Caco-2 (cell line): ENCODE measurements at regions of chr10 and their contacts with region 1.

Region 1: GRCh38 chr10:114103284-114103683 is 59.6 kb downstream of the ADRB1 start:
- DNase-seq: peak in 1 of 2 experiments; percentile 52
- H3K4me3 ChIP-seq: no peak overlapping the region
- H3K4me3 Mint-ChIP-seq: no peak overlapping the region
- H3K27ac Mint-ChIP-seq: no peak overlapping the region
- H3K4me1 ChIP-seq: no peaks in the 10 kb centered on the region
- H3K4me1 Mint-ChIP-seq: peaks cover 7% of the 10 kb centered on the region
- H3K27me3 ChIP-seq: no peaks in the 10 kb centered on the region
- H3K27me3 Mint-ChIP-seq: no peaks in the 10 kb centered on the region
- CTCF ChIP-seq: peak in 1 of 2 experiments; percentile 58

Region 2: DNA sequence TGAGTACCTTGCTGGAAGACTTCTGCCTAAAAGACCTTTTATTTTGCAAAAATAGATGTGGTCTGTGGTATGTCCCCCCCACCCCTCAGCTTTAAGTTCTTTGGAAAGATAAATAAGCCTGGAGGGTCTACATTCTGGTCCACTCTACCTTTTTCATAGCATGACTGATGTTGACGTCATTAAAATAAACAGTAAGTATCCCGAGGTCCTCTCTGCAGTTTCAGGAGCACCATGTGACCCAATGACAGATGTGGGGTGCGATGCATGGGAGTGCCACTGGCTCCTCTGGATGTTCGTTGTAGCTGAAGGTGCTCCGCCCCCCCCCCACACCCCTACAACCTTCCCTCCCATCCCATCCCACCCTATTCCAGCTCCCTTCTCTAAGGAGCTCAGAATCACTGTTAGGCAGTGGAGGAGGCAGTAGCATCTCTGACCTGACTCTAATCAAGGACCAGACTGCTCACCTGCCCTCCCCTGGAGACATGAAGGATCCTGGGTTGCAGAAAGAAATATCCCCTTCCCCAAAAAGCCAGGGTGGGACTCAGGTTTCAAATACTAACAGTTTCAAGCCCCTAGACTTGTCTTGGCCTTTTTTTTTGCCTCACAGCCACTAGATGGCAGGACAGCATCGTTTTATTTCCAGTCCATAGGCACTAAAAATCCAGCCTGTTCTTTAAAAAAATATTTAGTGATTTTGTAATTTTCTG is 398.5 kb before region 1 on chr10:
- CTCF ChIA-PET with region 1: no interaction called
- POLR2A ChIA-PET with region 1: no interaction called
- intact Hi-C with region 1: loop called (anchors 1 kb)
- DNase-seq: peak in 1 of 2 experiments; percentile 45
- H3K4me3 ChIP-seq: no peak overlapping the region
- H3K4me3 Mint-ChIP-seq: no peak overlapping the region
- H3K27ac Mint-ChIP-seq: no peak overlapping the region
- H3K4me1 ChIP-seq: no peaks in the 10 kb centered on the region
- H3K4me1 Mint-ChIP-seq: no peaks in the 10 kb centered on the region
- H3K27me3 ChIP-seq: no peaks in the 10 kb centered on the region
- H3K27me3 Mint-ChIP-seq: no peaks in the 10 kb centered on the region
- CTCF ChIP-seq: peak; percentile 71 to 76

Region 3: GRCh38 chr10:113735921-113736320 is 367.4 kb before region 1 on chr10:
- CTCF ChIA-PET with region 1: no interaction called
- POLR2A ChIA-PET with region 1: no interaction called
- intact Hi-C with region 1: loop called (anchors 1 kb)
- DNase-seq: peak; percentile 61 to 64
- H3K4me3 ChIP-seq: no peak overlapping the region
- H3K4me3 Mint-ChIP-seq: no peak overlapping the region
- H3K27ac Mint-ChIP-seq: no peak overlapping the region
- H3K4me1 ChIP-seq: peaks cover 9% of the 10 kb centered on the region
- H3K4me1 Mint-ChIP-seq: no peaks in the 10 kb centered on the region
- H3K27me3 ChIP-seq: no peaks in the 10 kb centered on the region
- H3K27me3 Mint-ChIP-seq: no peaks in the 10 kb centered on the region
- CTCF ChIP-seq: peak; percentile 22 to 46

Region 4: GRCh38 chr10:113802997-113803396 is 300.3 kb before region 1 on chr10:
- CTCF ChIA-PET with region 1: interaction called, 4 read pairs
- POLR2A ChIA-PET with region 1: no interaction called
- intact Hi-C with region 1: loop called (anchors 1 kb)
- DNase-seq: no peak
- H3K4me3 ChIP-seq: no peak overlapping the region
- H3K4me3 Mint-ChIP-seq: no peak overlapping the region
- H3K27ac Mint-ChIP-seq: no peak overlapping the region
- H3K4me1 ChIP-seq: no peaks in the 10 kb centered on the region
- H3K4me1 Mint-ChIP-seq: no peaks in the 10 kb centered on the region
- H3K27me3 ChIP-seq: no peaks in the 10 kb centered on the region
- H3K27me3 Mint-ChIP-seq: no peaks in the 10 kb centered on the region
- CTCF ChIP-seq: no peak

Region 5: GRCh38 chr10:113891476-113891875 is 211.8 kb before region 1 on chr10:
- CTCF ChIA-PET with region 1: no interaction called
- POLR2A ChIA-PET with region 1: no interaction called
- intact Hi-C with region 1: loop called (anchors 1 kb)
- DNase-seq: peak; percentile 41 to 42
- H3K4me3 ChIP-seq: no peak overlapping the region
- H3K4me3 Mint-ChIP-seq: no peak overlapping the region
- H3K27ac Mint-ChIP-seq: peak overlapping the region; percentile 37
- H3K4me1 ChIP-seq: peaks cover 30% of the 10 kb centered on the region
- H3K4me1 Mint-ChIP-seq: peaks cover 39% of the 10 kb centered on the region
- H3K27me3 ChIP-seq: no peaks in the 10 kb centered on the region
- H3K27me3 Mint-ChIP-seq: no peaks in the 10 kb centered on the region
- CTCF ChIP-seq: no peak

Region 6: DNA sequence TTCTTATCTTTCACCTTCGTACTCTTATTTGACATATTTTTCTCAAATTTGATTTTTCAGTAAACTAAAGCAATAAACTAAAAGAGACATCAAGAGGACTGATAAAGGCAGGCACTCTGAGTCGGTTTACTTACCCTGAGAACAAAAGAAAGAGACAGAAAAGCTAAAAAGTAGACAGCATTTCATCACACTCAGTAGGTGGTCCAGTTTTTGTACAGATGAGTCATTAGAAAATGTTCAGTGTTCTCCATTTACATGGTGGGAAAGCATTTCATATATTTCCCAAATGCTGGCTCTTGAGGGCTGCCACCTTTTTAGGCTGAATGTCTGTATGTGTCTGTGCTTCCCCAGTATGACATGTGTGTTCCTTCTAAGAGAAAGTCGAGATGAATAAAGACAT is 196.1 kb before region 1 on chr10:
- CTCF ChIA-PET with region 1: no interaction called
- POLR2A ChIA-PET with region 1: no interaction called
- intact Hi-C with region 1: loop called (anchors 5 kb)
- DNase-seq: no peak
- H3K4me3 ChIP-seq: no peak overlapping the region
- H3K4me3 Mint-ChIP-seq: peak overlapping the region; percentile 39
- H3K27ac Mint-ChIP-seq: peak overlapping the region; percentile 46
- H3K4me1 ChIP-seq: peaks cover 40% of the 10 kb centered on the region
- H3K4me1 Mint-ChIP-seq: peaks cover 19% of the 10 kb centered on the region
- H3K27me3 ChIP-seq: no peaks in the 10 kb centered on the region
- H3K27me3 Mint-ChIP-seq: no peaks in the 10 kb centered on the region
- CTCF ChIP-seq: no peak